PC-3 (cell line): ENCODE measurements at regions of chr2 and their contacts with region 1.

Region 1: DNA sequence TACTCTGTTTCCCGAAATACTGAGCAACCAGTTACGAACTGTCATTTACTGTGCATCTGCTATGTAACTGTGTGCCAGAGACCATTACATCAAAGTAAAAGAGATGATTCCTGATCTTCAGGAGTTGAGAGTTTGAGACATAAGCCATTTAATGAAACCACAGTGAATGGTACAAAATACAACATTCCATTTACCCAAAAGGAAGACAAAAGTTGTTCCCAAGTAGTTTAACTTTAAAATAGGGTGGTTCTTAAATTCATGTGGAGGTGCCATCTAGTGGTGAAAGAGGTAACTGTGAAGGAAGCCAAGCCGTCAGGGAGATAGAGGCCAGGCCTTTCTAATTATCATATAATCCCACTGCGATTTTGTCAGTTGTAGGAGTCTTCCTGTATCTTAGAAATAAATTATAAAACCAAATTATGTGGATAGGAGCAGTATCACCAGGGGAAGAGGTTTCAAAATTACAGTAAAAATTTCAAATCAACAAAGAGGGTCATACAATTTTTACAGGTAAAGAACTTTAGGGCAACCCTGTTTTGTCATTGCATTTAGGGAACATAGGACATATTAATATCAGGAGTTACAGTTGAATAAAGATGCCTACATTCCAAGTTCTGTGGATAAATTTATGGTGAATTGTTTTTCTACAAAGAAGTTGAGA is 67.7 kb downstream of the EPAS1 start:
- DNase-seq: peak; percentile 83
- ATAC-seq: peak; percentile 59
- H3K4me3 ChIP-seq: no peak overlapping the region
- H3K27ac ChIP-seq: no peak overlapping the region
- H3K4me1 ChIP-seq: peaks cover 11% of the 10 kb centered on the region
- H3K27me3 ChIP-seq: no peaks in the 10 kb centered on the region
- CTCF ChIP-seq: peak; percentile 95

Region 2: DNA sequence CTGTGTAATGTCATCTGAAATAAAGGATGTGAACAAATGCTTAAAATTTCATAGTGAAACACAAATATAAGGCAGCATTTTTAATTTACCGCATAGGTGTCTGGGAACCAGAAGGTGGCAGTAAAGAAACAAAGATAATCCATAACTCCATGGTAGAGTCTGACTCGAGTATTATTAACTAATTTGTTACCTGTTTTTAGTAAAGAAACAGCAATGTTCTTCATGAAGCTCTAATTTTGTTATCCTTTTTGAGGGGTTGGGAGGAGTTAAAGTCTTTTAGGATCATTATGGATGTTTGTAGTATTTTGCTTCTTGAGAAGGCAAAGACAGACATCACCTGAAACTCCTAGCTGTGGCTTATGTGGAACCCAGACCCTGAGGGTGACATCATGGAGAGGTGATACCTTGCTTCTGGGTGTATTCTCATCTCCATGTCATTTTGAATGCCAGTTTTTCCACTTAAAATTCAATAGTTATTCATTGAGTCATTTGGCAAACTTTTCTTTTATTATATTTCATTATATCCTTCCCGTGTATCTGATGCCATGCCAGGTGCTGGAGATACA is 353.9 kb before region 1 on chr2:
- CTCF ChIA-PET with region 1: interaction called, 4 read pairs
- POLR2A ChIA-PET with region 1: no interaction called
- intact Hi-C with region 1: loop called (anchors 1 kb)
- DNase-seq: peak; percentile 72
- ATAC-seq: peak; percentile 75
- H3K4me3 ChIP-seq: no peak overlapping the region
- H3K27ac ChIP-seq: peak overlapping the region; percentile 44
- H3K4me1 ChIP-seq: peaks cover 27% of the 10 kb centered on the region
- H3K27me3 ChIP-seq: no peaks in the 10 kb centered on the region
- CTCF ChIP-seq: peak; percentile 94

Region 3: DNA sequence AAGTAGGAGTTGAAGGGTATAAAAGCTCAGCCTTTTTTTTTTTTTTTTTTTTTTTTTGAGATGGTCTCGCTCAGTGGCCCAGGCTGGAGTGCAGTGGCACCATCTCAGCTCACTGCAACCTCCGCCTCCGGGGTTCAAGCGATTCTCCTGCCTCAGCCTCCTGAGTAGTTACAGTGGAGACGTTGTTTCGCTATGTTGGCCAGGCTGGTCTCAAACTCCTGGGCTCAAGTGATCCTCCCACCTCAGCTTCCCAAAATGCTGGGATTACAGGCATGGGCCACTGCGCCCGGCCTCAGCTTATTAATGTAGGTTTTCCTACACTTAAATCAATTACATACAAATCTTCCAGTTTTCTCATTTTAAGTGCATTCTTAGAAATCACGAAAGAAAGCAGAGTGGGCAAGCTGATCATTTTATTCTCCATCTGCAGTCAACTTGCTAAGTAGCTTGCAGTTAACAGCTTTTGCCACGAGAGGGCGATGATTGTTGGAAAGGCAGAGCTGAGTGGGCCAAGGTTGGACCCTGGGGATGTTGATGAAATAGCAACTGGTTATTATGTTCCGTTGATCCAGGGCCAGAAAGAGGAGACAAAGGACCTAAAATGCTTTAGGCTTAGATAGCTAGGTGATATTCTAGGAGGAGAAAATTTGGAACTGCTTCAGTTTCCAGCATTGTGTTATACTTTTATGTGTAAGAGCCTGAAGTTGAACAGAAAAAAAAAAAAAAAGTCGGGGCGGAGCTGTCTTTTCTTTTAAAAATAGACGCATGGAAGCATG is 302.1 kb before region 1 on chr2:
- CTCF ChIA-PET with region 1: no interaction called
- POLR2A ChIA-PET with region 1: no interaction called
- intact Hi-C with region 1: loop called (anchors 2 kb)
- DNase-seq: peak; percentile 92
- ATAC-seq: peak; percentile 73
- H3K4me3 ChIP-seq: no peak overlapping the region
- H3K27ac ChIP-seq: no peak overlapping the region
- H3K4me1 ChIP-seq: peaks cover 19% of the 10 kb centered on the region; the same call in 1 of the 2 replicates
- H3K27me3 ChIP-seq: no peaks in the 10 kb centered on the region
- CTCF ChIP-seq: peak; percentile 92

Region 4: DNA sequence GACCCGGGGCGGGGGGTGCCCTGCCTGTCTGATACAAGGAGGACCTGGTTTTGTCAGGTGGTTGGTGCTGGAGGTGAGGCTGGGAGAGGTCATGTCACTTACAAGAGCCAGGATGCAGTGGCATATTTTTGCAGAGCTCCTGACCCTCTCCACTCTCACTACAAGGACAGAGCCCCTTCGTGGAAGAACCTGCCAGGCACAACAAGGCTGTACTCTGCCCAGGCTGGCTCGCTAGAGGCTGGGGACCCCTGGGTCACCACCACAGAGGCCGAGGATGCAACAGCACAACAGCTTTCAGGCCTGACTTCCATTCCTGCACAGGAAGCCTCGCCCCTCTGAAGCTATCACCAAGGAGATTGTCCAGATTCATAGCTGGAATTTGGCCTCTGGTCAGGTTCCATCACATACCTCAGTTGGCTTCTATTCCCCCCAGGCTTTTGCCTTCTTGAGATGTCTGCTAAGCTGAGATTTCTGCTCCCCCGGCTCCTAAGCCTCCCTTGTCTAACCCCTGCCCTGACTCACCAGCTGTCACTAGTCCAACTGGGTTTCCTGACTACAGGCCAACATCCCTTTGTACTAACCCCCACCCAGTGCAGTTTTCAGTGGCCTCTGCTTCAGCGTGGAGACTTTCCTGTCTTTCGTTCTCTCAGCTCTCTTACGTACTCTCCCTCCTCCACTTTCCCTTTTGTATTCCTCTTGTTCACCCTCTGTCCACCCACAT is 200.2 kb before region 1 on chr2:
- CTCF ChIA-PET with region 1: no interaction called
- POLR2A ChIA-PET with region 1: no interaction called
- intact Hi-C with region 1: loop called (anchors 10 kb)
- DNase-seq: peak; percentile 99
- ATAC-seq: peak; percentile 66
- H3K4me3 ChIP-seq: peak overlapping the region; percentile 41; the same call in 1 of the 2 replicates
- H3K27ac ChIP-seq: peak overlapping the region; percentile 95
- H3K4me1 ChIP-seq: peaks cover 35% of the 10 kb centered on the region
- H3K27me3 ChIP-seq: no peaks in the 10 kb centered on the region
- CTCF ChIP-seq: no peak

Region 5: GRCh38 chr2:46241344-46241743 is 123.6 kb before region 1 on chr2:
- CTCF ChIA-PET with region 1: no interaction called
- POLR2A ChIA-PET with region 1: no interaction called
- intact Hi-C with region 1: no loop called
- DNase-seq: peak; percentile 38
- ATAC-seq: peak; percentile 69
- H3K4me3 ChIP-seq: no peak overlapping the region
- H3K27ac ChIP-seq: no peak overlapping the region
- H3K4me1 ChIP-seq: peaks cover 6% of the 10 kb centered on the region; the same call in 1 of the 2 replicates
- H3K27me3 ChIP-seq: no peaks in the 10 kb centered on the region
- CTCF ChIP-seq: no peak

Region 6: DNA sequence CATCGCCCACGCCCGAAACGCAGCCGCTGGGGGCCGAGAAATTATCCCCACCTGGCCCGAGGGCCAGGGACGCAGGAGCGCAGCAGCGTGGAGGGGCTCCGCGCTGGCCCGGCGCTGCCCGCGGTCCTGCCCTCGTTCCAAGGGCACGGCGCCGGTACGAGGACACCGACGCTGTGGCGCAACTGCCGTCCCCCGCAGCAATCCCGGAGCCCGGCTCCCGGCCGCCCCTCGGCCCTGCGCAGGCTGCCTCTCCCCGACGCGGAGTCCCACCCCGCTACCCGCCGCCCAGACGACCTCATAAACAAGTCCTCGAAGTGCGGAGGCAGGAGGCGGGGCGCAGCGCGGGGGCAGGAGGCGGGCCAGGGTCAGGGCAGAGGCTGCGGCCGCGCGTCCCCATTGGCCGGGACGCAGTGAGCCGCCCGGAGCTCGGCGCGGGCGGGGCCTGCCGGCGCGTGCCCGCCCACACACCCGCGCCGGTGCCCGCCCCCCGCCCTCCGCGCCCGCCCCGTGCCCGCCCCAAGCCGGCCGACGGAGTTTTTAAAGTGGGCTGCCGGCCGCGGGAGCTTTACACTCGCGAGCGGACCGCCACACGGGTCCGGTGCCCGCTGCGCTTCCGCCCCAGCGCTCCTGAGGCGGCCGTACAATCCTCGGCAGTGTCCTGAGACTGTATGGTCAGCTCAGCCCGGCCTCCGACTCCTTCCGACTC is 67.9 kb before region 1 on chr2 and contains the start of gene EPAS1:
- CTCF ChIA-PET with region 1: no interaction called
- POLR2A ChIA-PET with region 1: no interaction called
- intact Hi-C with region 1: loop called (anchors 1 kb)
- DNase-seq: peak; percentile 80
- ATAC-seq: peak; percentile 77
- H3K4me3 ChIP-seq: peak within 1 kb of the TSS; percentile 98
- H3K27ac ChIP-seq: peak within 1 kb of the TSS; percentile 72
- H3K4me1 ChIP-seq: peaks cover 9% of the 10 kb centered on the region
- H3K27me3 ChIP-seq: no peaks in the 10 kb centered on the region
- CTCF ChIP-seq: no peak
- total RNA-seq, gene EPAS1: 43.2 and 77.0 TPM in 2 replicates

Region 7: GRCh38 chr2:46335391-46336282 is 29.3 kb before region 1 on chr2:
- CTCF ChIA-PET with region 1: no interaction called
- POLR2A ChIA-PET with region 1: no interaction called
- intact Hi-C with region 1: loop called (anchors 2 kb)
- DNase-seq: peak; percentile 51
- ATAC-seq: peak; percentile 12; the same call in 1 of the 2 replicates
- H3K4me3 ChIP-seq: no peak overlapping the region
- H3K27ac ChIP-seq: peak overlapping the region; percentile 65
- H3K4me1 ChIP-seq: peaks cover 27% of the 10 kb centered on the region
- H3K27me3 ChIP-seq: no peaks in the 10 kb centered on the region
- CTCF ChIP-seq: no peak

Region 8: GRCh38 chr2:46439582-46439981 is 74.7 kb after region 1 on chr2:
- CTCF ChIA-PET with region 1: no interaction called
- POLR2A ChIA-PET with region 1: no interaction called
- intact Hi-C with region 1: no loop called
- DNase-seq: no peak
- ATAC-seq: no peak
- H3K4me3 ChIP-seq: no peak overlapping the region
- H3K27ac ChIP-seq: no peak overlapping the region
- H3K4me1 ChIP-seq: peaks cover 6% of the 10 kb centered on the region; the same call in 1 of the 2 replicates
- H3K27me3 ChIP-seq: no peaks in the 10 kb centered on the region
- CTCF ChIP-seq: no peak

Region 9: GRCh38 chr2:46461011-46461674 is 96.2 kb after region 1 on chr2:
- CTCF ChIA-PET with region 1: no interaction called
- POLR2A ChIA-PET with region 1: no interaction called
- intact Hi-C with region 1: loop called (anchors 1 kb)
- DNase-seq: peak; percentile 82
- ATAC-seq: peak; percentile 62
- H3K4me3 ChIP-seq: no peak overlapping the region
- H3K27ac ChIP-seq: no peak overlapping the region
- H3K4me1 ChIP-seq: peaks cover 11% of the 10 kb centered on the region
- H3K27me3 ChIP-seq: no peaks in the 10 kb centered on the region
- CTCF ChIP-seq: peak; percentile 99